ENCODE measurements at regions of chr9 and their contacts with region 1.

Region 1: DNA sequence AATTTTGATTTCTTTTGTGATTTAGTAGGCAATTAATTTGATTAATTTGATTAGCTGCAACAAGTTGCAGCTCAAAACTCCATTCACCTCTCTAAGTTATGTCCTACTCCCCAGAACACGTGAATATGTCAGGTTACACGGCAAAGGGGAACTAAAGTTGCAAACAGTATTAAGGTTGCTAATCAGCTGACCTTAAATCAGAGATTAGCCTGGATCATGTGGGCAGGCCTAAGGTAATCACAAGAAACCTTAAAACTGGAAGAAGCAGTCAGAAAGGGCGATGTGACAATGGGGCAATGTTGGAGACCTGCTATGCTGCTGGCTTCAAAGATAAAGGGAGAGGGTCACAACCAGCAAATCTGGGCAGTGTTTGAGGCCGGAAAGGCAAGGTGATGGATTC is 47.3 kb upstream of the ANXA1 start:
- DNase-seq: no peak
- ATAC-seq: no peak
- H3K4me3 Mint-ChIP-seq: no peak overlapping the region
- H3K27ac Mint-ChIP-seq: no peak overlapping the region
- H3K4me1 Mint-ChIP-seq: no peaks in the 10 kb centered on the region
- H3K27me3 Mint-ChIP-seq: no peaks in the 10 kb centered on the region
- CTCF ChIP-seq: no peak

Region 2: GRCh38 chr9:72925126-72925789 is 179.1 kb before region 1 on chr9:
- CTCF ChIA-PET with region 1: no interaction called
- POLR2A ChIA-PET with region 1: no interaction called
- DNase-seq: no peak
- ATAC-seq: no peak
- H3K4me3 Mint-ChIP-seq: no peak overlapping the region
- H3K27ac Mint-ChIP-seq: no peak overlapping the region
- H3K4me1 Mint-ChIP-seq: no peaks in the 10 kb centered on the region
- H3K27me3 Mint-ChIP-seq: no peaks in the 10 kb centered on the region
- CTCF ChIP-seq: no peak

Region 3: GRCh38 chr9:73030370-73031030 is 73.8 kb before region 1 on chr9:
- CTCF ChIA-PET with region 1: no interaction called
- POLR2A ChIA-PET with region 1: no interaction called
- DNase-seq: no peak
- ATAC-seq: no peak
- H3K4me3 Mint-ChIP-seq: no peak overlapping the region
- H3K27ac Mint-ChIP-seq: no peak overlapping the region
- H3K4me1 Mint-ChIP-seq: no peaks in the 10 kb centered on the region
- H3K27me3 Mint-ChIP-seq: no peaks in the 10 kb centered on the region
- CTCF ChIP-seq: no peak

Region 4: DNA sequence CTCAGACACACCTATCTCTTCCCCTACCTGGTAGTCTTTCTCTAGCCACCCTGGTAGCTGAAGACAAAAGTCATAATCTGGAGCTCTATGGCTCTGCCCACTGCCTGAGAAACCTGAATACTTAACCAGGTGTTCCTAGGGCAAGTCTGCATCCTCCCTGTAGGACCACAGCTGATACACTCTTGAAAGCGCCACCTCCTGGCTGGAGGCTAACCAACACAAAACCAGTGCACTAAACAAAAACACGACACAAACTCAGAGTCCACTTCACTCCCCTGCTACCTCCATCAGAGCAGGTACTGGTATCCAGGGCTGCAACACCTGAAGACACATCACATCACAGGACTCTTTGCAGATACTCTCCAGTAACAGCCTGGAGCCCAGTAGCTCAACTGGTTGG is 37.3 kb before region 1 on chr9:
- CTCF ChIA-PET with region 1: no interaction called
- POLR2A ChIA-PET with region 1: no interaction called
- DNase-seq: peak; percentile 30
- ATAC-seq: peak; percentile 55
- H3K4me3 Mint-ChIP-seq: no peak overlapping the region
- H3K27ac Mint-ChIP-seq: no peak overlapping the region
- H3K4me1 Mint-ChIP-seq: no peaks in the 10 kb centered on the region; the same call in 1 of the 2 replicates
- H3K27me3 Mint-ChIP-seq: no peaks in the 10 kb centered on the region
- CTCF ChIP-seq: no peak

Region 5: DNA sequence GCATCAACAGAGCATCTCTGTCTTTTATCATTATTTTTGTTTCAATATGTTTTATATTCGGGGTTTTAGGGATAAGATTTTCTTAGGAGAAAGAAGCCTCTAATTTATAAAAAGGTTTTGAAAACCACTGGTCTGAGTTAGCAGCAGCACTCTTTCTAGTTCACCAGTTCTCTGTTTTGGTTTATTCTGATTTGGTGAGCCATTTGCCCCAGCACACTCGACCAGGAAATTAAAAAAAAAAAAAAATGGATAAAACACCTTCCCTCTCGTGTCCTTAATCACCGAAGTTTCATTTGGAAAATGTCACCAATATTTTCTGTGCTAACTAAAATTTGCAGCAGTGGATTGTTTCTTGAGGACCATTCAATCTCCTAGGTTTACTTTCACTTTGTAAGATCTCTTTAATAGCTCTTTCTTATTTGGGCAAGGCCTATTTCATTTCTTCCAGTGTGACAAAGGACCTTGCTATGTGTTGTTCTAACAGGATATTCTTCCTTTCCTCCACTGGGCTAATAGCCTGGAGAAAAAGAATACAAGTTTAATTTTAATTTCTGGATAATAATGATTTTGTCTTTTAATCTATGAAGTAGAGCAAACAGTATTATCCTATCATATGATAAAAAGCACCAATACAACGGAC is 10.5 kb before region 1 on chr9:
- CTCF ChIA-PET with region 1: interaction called, 15 read pairs
- POLR2A ChIA-PET with region 1: no interaction called
- DNase-seq: no peak
- ATAC-seq: no peak
- H3K4me3 Mint-ChIP-seq: no peak overlapping the region
- H3K27ac Mint-ChIP-seq: no peak overlapping the region
- H3K4me1 Mint-ChIP-seq: peaks cover 6% of the 10 kb centered on the region; the same call in 1 of the 2 replicates
- H3K27me3 Mint-ChIP-seq: no peaks in the 10 kb centered on the region
- CTCF ChIP-seq: no peak

Region 6: DNA sequence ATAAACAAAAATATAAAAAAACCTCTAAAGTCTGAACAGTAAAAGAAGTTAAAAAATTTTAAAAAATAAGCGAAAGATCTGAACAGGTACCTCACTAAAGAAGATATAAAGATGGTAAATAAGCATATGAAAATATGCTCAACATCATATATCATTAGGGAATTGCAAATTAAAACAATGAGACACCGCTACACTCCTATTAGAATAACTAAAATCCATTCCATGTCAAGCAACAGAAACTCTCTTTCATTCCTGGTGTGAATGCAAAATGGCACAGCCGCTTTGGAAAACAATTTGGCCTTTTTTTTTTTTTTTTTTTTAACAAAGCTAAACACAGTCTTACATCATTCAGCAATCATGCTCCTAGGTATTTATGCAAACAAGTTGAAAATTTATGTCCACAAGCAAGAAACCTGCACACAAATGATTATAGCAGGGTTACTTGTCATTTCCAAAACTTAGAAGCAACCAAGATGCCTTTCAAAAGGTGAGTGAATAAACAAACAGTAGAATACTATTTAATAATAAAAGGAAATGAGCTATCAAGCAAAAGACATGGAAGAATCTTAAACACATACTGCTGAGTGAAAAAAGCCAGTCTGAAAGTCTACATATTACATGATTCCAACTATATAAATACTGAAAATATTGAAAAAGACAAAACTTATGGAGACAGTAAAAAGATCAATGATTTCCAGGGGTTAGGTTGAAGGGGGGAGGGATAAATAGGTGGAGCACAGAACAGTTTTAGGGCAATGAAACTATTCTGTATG is 69.4 kb after region 1 on chr9:
- CTCF ChIA-PET with region 1: interaction called, 16 read pairs
- POLR2A ChIA-PET with region 1: no interaction called
- DNase-seq: no peak
- ATAC-seq: no peak
- H3K4me3 Mint-ChIP-seq: no peak overlapping the region
- H3K27ac Mint-ChIP-seq: no peak overlapping the region
- H3K4me1 Mint-ChIP-seq: peaks cover 11% of the 10 kb centered on the region; the same call in 1 of the 2 replicates
- H3K27me3 Mint-ChIP-seq: no peaks in the 10 kb centered on the region
- CTCF ChIP-seq: no peak

Region 7: DNA sequence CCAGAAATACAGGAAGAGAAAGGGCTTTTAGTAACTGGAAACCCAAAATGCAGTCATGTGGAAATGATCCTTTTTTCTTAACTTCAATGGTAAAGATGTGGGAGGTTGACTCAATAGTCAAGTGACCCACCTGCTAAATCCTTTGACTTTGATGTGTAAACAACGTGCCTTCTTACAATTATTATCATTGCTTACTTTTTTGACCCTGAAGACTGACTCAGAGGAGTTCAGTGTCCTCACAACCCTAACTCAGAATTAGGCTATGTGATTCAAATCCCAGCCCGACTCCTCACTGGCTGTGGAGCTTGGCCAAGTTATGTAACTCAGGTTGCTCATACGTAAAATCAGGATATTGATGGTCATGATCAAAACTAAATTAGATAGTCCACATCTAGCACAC is 75.2 kb after region 1 on chr9:
- CTCF ChIA-PET with region 1: interaction called, 16 read pairs
- POLR2A ChIA-PET with region 1: no interaction called
- DNase-seq: no peak
- ATAC-seq: no peak
- H3K4me3 Mint-ChIP-seq: no peak overlapping the region
- H3K27ac Mint-ChIP-seq: no peak overlapping the region
- H3K4me1 Mint-ChIP-seq: peaks cover 11% of the 10 kb centered on the region
- H3K27me3 Mint-ChIP-seq: no peaks in the 10 kb centered on the region
- CTCF ChIP-seq: no peak

Region 8: GRCh38 chr9:73200694-73201452 is 96.5 kb after region 1 on chr9:
- CTCF ChIA-PET with region 1: interaction called, 12 read pairs
- POLR2A ChIA-PET with region 1: no interaction called
- DNase-seq: no peak
- ATAC-seq: peak; percentile 62; the same call in 1 of the 2 replicates
- H3K4me3 Mint-ChIP-seq: no peak overlapping the region
- H3K27ac Mint-ChIP-seq: no peak overlapping the region
- H3K4me1 Mint-ChIP-seq: peaks cover 12% of the 10 kb centered on the region
- H3K27me3 Mint-ChIP-seq: no peaks in the 10 kb centered on the region
- CTCF ChIP-seq: peak; percentile 29; the same call in 1 of the 2 replicates

Measured in WTC11 (cell line).